Prostate gland (tissue), 2 donors: ENCODE measurements at regions of chr4 and their contacts with region 1.

Region 1: DNA sequence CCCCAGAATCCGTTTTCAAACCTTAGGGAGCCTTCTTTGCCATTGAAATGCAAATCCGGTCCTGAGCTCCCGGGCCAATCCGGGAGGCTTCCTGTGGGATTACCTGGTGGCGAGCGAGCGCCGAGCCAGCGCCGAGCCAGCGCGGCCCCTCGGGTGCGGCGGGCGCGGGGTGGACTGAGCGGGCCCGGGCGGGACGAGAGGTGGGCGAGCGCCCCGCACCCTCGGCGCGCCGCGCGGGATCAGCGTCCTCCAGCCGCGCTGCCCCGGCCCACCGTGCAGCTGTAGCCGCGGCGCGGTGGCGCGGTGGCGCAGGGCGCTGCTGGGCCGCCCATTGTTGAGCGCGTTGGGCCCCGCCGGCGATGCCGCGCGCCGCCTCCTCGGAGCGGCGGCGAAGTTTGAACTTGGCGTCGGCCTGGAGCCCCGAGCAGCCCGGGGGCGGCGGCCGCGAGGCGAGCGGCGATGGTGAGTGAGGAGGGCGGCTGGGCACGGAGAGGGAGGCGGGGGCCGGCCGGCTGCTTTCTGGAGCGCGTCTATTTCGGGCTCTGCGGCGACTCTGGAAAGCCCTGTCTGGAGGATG is 208.6 kb downstream of the SOWAHB start:
- DNase-seq: peak; percentile 60
- H3K4me3 ChIP-seq: peak overlapping the region; percentile 50 to 64
- H3K27ac ChIP-seq: peak overlapping the region; percentile 88
- H3K4me1 ChIP-seq: peaks cover 16% of the 10 kb centered on the region
- H3K27me3 ChIP-seq: no peaks in the 10 kb centered on the region
- CTCF ChIP-seq: no peak
- POLR2A ChIP-seq: no peak

Region 2: DNA sequence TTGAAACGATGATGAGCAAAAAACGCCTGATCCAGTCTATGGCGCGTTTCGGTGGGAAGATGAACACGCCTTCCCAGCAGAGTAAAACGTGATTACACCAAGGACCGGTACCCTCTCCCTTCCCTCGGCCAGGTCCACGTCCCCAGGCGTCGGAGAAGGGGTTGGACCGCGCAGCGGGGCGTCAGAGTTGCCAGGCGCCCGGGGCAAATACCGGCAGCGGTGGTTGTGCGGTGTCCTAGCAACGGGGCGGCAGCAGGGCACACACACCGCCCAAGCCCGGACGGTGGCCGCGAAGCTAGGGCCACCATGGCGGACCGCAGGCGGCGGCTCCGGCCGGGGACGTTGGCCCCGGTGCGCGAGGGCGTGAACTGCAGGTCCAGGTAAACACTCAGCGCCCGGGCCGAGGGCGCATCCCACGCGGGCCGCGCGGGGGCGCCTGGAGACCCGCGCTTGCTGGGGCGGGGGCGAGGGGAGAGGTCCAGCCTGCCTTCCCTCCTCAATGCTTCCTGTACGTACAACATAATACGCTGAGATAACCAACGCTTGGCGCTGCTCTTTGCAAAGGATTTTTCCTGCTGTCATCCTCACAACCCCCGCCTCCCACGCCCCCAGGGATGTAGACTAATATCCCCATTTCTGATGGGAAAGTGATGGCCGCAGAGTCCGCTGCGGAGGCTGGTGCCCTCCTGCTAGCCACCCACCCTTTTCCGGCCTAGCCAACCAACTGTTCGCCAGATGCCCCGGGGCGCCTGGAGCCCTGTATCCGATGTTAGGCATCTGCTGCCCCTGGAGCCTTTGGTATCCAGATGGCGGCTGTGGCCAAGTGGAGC is 437.7 kb before region 1 on chr4 and contains the start of gene FAM47E:
- intact Hi-C with region 1: no loop called
- DNase-seq: peak; percentile 72
- H3K4me3 ChIP-seq: peak within 1 kb of the TSS; percentile 57 to 66
- H3K27ac ChIP-seq: peak within 1 kb of the TSS; percentile 48 to 58
- H3K4me1 ChIP-seq: no peaks in the 10 kb centered on the region
- H3K27me3 ChIP-seq: no peaks in the 10 kb centered on the region
- CTCF ChIP-seq: peak in 3 of 4 experiments; percentile 32 to 62 (median 34)
- POLR2A ChIP-seq: peak; percentile 37
- total RNA-seq, gene FAM47E: 12.3 to 15.1 TPM

Region 3: GRCh38 chr4:76624241-76624681 is 65.1 kb before region 1 on chr4:
- intact Hi-C with region 1: loop called (anchors 5 kb)
- DNase-seq: no peak
- H3K4me3 ChIP-seq: no peak overlapping the region
- H3K27ac ChIP-seq: peak overlapping the region in 1 of 2 donors; percentile 74
- H3K4me1 ChIP-seq: peaks cover 9% of the 10 kb centered on the region
- H3K27me3 ChIP-seq: no peaks in the 10 kb centered on the region
- CTCF ChIP-seq: no peak
- POLR2A ChIP-seq: no peak

Region 4: DNA sequence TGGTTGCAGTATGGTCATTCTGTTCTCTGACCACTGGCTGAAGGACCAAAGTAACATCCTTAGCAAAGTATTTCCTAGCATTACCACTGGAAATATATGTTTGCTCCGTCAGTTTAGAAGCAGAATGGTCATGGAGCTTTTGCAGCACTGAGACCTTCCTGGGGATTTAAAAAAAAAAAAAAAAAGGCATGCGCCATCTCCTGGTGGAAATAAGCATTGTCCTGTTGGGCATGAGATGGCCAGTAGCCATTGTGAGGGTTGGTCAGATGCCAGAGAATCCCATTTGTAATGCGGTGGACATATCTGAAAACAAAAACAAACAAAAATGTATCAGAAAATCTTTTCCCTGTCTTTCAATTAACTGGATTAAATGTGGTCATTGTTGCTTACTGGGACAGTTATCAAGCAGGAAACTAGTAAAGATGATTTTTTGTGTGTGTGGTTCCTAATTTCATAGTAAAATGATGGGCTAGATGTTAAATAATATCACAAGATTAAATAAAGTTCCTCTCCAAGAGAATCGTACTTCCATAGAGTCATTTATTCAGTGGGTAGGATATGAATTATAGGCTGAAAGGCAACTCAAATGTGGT is 69.1 kb after region 1 on chr4:
- intact Hi-C with region 1: loop called (anchors 5 kb)
- DNase-seq: no peak
- H3K4me3 ChIP-seq: no peak overlapping the region
- H3K27ac ChIP-seq: peak overlapping the region; percentile 47 to 54
- H3K4me1 ChIP-seq: no peaks in the 10 kb centered on the region
- H3K27me3 ChIP-seq: no peaks in the 10 kb centered on the region
- CTCF ChIP-seq: peak; percentile 51 to 72 (median 63)
- POLR2A ChIP-seq: no peak

Region 5: GRCh38 chr4:76772498-76773106 is 83.3 kb after region 1 on chr4:
- intact Hi-C with region 1: no loop called
- DNase-seq: no peak
- H3K4me3 ChIP-seq: no peak overlapping the region
- H3K27ac ChIP-seq: no peak overlapping the region
- H3K4me1 ChIP-seq: no peaks in the 10 kb centered on the region
- H3K27me3 ChIP-seq: no peaks in the 10 kb centered on the region
- CTCF ChIP-seq: no peak
- POLR2A ChIP-seq: no peak

Region 6: GRCh38 chr4:77284036-77284435 is 594.7 kb after region 1 on chr4:
- intact Hi-C with region 1: no loop called
- DNase-seq: no peak
- H3K4me3 ChIP-seq: no peak overlapping the region
- H3K27ac ChIP-seq: no peak overlapping the region
- H3K4me1 ChIP-seq: no peaks in the 10 kb centered on the region
- H3K27me3 ChIP-seq: no peaks in the 10 kb centered on the region
- CTCF ChIP-seq: no peak
- POLR2A ChIP-seq: no peak